ENCODE measurements at regions of chr5 and their contacts with region 1.

Region 1: GRCh38 chr5:29984156-29984540 is 1209.3 kb upstream of the CDH6 start:
- DNase-seq: no peak
- ATAC-seq: no peak
- H3K4me3 ChIP-seq: no peak overlapping the region
- H3K4me3 Mint-ChIP-seq: no peak overlapping the region
- H3K27ac ChIP-seq: no peak overlapping the region
- H3K27ac Mint-ChIP-seq: no peak overlapping the region
- H3K4me1 ChIP-seq: no peaks in the 10 kb centered on the region
- H3K4me1 Mint-ChIP-seq: no peaks in the 10 kb centered on the region
- H3K27me3 ChIP-seq: no peaks in the 10 kb centered on the region
- H3K27me3 Mint-ChIP-seq: no peaks in the 10 kb centered on the region
- CTCF ChIP-seq: no peak

Region 2: DNA sequence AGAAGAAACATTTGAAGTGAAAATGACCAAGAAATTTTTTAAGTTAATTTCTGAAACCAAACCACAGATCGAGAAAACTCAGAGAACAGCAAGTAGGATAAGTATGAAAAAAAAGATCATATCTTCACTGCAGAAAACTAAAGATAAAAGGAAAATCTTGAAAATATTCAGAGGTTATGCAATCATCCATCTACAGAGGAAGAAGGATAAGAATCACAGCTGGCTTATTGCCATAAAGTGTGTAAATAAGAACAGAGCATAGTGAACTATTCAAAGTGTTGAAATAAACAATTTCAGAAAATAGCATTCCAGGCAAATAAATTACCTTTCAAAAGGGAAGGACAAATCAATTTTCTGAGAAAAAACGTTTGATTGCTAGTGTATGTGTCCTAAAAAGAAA is 17.7 kb after region 1 on chr5:
- CTCF ChIA-PET with region 1: no interaction called
- POLR2A ChIA-PET with region 1: no interaction called
- intact Hi-C with region 1: loop called (anchors 1 kb)
- DNase-seq: no peak
- ATAC-seq: no peak
- H3K4me3 ChIP-seq: no peak overlapping the region
- H3K4me3 Mint-ChIP-seq: no peak overlapping the region
- H3K27ac ChIP-seq: no peak overlapping the region
- H3K27ac Mint-ChIP-seq: no peak overlapping the region
- H3K4me1 ChIP-seq: no peaks in the 10 kb centered on the region
- H3K4me1 Mint-ChIP-seq: no peaks in the 10 kb centered on the region
- H3K27me3 ChIP-seq: no peaks in the 10 kb centered on the region
- H3K27me3 Mint-ChIP-seq: no peaks in the 10 kb centered on the region
- CTCF ChIP-seq: no peak

Region 3: GRCh38 chr5:30041831-30042385 is 57.8 kb after region 1 on chr5:
- CTCF ChIA-PET with region 1: no interaction called
- POLR2A ChIA-PET with region 1: no interaction called
- intact Hi-C with region 1: no loop called
- DNase-seq: no peak
- ATAC-seq: no peak
- H3K4me3 ChIP-seq: no peak overlapping the region
- H3K4me3 Mint-ChIP-seq: no peak overlapping the region
- H3K27ac ChIP-seq: no peak overlapping the region
- H3K27ac Mint-ChIP-seq: no peak overlapping the region
- H3K4me1 ChIP-seq: no peaks in the 10 kb centered on the region
- H3K4me1 Mint-ChIP-seq: no peaks in the 10 kb centered on the region
- H3K27me3 ChIP-seq: no peaks in the 10 kb centered on the region
- H3K27me3 Mint-ChIP-seq: no peaks in the 10 kb centered on the region
- CTCF ChIP-seq: no peak